Activated CD4-positive, alpha-beta T cell treated with anti-CD3 and anti-CD28 coated beads, Interleukin-2, amount 10 ng/mL, durations not matched to agents 24 days and 14 days (primary cell): ENCODE measurements at regions of chr1 and their contacts with region 1.

Region 1: GRCh38 chr1:20493839-20494608 is 8.0 kb upstream of the CAMK2N1 start:
- DNase-seq: peak; percentile 95
- H3K4me3 Mint-ChIP-seq: no peak overlapping the region
- H3K27ac Mint-ChIP-seq: no peak overlapping the region
- H3K4me1 Mint-ChIP-seq: peaks cover 8% of the 10 kb centered on the region
- H3K27me3 Mint-ChIP-seq: peaks cover 25% of the 10 kb centered on the region

Region 2: DNA sequence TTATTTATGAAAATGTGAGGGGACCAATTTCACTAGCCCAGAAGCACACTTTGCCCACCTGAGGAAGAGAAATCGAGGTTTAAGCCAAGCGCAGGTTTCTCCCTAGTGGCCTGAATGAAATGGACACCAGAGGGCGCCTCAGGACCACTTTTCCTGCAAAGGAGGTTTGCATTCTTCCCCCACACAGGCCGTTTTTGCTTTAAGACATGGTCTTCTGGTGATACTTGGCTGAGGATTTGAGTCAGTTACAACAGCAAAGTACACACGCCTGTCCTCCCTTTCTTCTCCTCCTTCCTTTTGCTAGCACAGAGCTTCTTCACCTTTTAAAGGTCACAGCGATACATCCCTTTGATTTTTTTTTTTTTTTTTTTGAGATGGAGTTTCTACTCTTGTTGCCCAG is 576.0 kb before region 1 on chr1:
- intact Hi-C with region 1: loop called (anchors 10 kb)
- DNase-seq: peak; percentile 93
- H3K4me3 Mint-ChIP-seq: no peak overlapping the region
- H3K27ac Mint-ChIP-seq: no peak overlapping the region
- H3K4me1 Mint-ChIP-seq: peaks cover 5% of the 10 kb centered on the region
- H3K27me3 Mint-ChIP-seq: no peaks in the 10 kb centered on the region

Region 3: DNA sequence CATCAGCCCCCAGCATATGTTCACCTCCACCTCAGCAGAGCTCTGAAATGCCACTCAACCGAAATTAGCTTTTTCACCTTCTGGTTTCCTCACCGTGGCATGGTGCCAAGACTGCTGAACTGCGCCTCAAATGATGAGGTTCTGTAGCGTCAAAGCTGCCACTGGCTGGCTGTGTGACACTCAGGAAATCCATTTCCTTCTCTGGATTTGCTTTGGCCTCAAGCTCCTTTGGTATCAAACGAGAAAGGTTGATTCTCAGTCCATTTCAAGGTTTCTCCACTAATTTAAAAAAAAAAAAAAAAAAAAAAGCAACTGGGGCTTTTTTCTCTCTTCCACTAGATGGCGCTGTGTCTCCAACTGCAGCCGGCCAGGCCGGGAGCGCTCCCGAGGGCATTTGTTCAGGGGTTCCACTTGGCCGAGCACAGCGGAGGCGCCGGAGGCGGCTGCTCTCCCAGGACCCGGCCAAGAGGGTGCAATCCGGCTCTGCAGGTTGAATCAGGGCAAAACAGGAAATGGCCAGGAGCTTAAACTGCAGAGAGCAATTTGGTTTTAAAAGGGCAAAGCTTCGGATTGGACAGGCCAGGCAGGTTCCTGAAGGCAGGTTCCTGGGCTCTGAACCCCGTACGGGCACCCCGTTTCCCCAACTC is 281.2 kb before region 1 on chr1:
- intact Hi-C with region 1: loop called (anchors 1 kb)
- DNase-seq: peak; percentile 84
- H3K4me3 Mint-ChIP-seq: no peak overlapping the region
- H3K27ac Mint-ChIP-seq: no peak overlapping the region
- H3K4me1 Mint-ChIP-seq: peaks cover 6% of the 10 kb centered on the region
- H3K27me3 Mint-ChIP-seq: peaks cover 45% of the 10 kb centered on the region

Region 4: GRCh38 chr1:20361806-20362640 is 132.0 kb before region 1 on chr1:
- intact Hi-C with region 1: loop called (anchors 5 kb)
- DNase-seq: peak; percentile 76
- H3K4me3 Mint-ChIP-seq: no peak overlapping the region
- H3K27ac Mint-ChIP-seq: no peak overlapping the region
- H3K4me1 Mint-ChIP-seq: peaks cover 3% of the 10 kb centered on the region
- H3K27me3 Mint-ChIP-seq: peaks cover 55% of the 10 kb centered on the region

Region 5: DNA sequence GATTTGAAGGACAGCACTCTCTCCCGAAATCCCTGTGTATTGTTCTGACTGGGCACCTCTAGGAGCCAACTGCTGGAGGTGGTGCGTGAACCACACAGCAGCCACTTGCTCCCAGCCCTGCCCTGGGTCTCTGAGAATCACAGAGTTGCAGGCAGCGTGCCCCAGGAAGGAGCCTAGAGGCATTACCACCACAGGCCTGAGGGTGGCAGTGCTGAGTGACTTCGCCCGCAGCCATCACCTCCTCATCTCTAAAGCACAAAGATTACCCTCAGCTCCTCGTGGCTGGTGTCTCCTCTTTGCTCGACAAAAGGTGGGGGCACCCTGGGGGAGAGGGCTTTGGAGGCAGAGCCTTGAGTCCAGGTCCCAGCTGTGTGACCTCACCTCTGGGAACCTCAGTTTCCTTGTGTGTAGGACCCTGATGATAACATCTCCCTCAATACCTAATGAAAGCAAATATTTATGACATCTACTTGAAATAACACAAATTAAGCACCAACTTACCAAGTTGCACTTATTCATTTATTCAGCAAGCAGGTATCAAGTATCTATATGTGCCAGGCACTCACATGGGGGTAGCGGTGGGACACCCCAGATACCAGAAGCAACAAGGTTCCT is 117.0 kb before region 1 on chr1:
- intact Hi-C with region 1: loop called (anchors 1 kb)
- DNase-seq: peak; percentile 87
- H3K4me3 Mint-ChIP-seq: no peak overlapping the region
- H3K27ac Mint-ChIP-seq: no peak overlapping the region
- H3K4me1 Mint-ChIP-seq: peaks cover 3% of the 10 kb centered on the region
- H3K27me3 Mint-ChIP-seq: peaks cover 18% of the 10 kb centered on the region

Region 6: DNA sequence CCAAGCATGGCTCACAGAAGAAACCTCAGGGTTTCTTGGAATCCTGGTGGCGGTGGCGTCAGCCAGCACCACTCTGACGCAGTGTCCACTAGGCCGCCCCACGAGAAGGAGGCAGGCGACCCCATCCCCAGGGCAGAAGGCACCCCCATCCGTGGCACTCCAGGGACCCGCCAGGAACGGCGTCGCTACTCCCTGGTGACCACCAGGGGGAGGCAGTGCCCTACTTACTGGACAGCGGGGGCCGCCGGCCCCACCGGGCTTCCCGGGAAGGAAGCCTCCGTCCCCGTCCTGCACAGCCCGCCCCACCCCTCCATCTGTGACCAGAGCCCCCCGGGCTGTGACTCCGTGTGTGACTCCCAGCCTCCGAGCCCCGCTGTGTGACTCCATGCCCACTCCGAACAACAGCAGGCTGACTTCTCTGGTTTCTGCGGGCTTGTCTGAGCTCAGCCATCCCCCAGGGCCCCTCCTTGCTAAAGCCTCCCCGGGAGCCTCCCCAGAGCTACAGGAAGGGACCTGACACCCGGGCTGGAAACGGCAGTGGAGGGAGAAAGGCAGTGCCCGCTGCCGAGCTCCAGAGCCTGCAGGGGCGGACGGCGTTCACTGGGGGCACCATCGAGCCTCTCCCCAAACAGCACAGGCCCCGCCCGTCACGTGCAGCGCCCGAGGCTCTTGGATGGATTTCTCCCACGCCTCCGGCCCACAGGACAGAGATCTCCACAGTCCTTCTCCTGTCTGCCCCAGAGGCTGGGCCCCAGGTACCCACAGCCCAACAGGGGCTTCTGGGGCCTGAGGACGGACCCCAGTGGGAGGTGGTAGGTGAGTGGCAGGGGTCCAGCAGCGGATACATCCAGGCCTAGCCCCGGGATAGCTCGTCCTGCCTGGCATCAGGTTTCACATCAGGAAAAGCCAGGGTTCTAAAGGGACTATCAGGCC is 202.6 kb after region 1 on chr1:
- intact Hi-C with region 1: no loop called
- DNase-seq: peak; percentile 90
- H3K4me3 Mint-ChIP-seq: peak overlapping the region; percentile 89
- H3K27ac Mint-ChIP-seq: peak overlapping the region; percentile 34
- H3K4me1 Mint-ChIP-seq: peaks cover 7% of the 10 kb centered on the region
- H3K27me3 Mint-ChIP-seq: peaks cover 7% of the 10 kb centered on the region